ENCODE measurements at regions of chr1 and their contacts with region 1.

Region 1: GRCh38 chr1:15110875-15111230 is 42.7 kb upstream of the TMEM51 start:
- DNase-seq: no peak
- H3K4me3 ChIP-seq: no peak overlapping the region
- H3K27ac ChIP-seq: no peak overlapping the region
- H3K4me1 ChIP-seq: peaks cover 14 to 32% (median 16%) of the 10 kb centered on the region in 4 experiments
- H3K27me3 ChIP-seq: no peaks in the 10 kb centered on the region; a peak in 1 of 7 replicates
- CTCF ChIP-seq: peak; percentile 56 to 63 (median 60)
- EP300 ChIP-seq: no peak
- POLR2A ChIP-seq: no peak
- RAD21 ChIP-seq: peak; percentile 48 to 69

Region 2: GRCh38 chr1:15261155-15262002 is 150.5 kb after region 1 on chr1:
- CTCF ChIA-PET with region 1: no interaction called
- POLR2A ChIA-PET with region 1: no interaction called
- DNase-seq: peak in 1 of 2 experiments; percentile 46
- H3K4me3 ChIP-seq: no peak overlapping the region
- H3K27ac ChIP-seq: no peak overlapping the region
- H3K4me1 ChIP-seq: peaks cover 0 to 4% (median 2%) of the 10 kb centered on the region in 4 experiments; a peak in 3 of 7 replicates
- H3K27me3 ChIP-seq: no peaks in the 10 kb centered on the region
- CTCF ChIP-seq: no peak
- EP300 ChIP-seq: no peak
- POLR2A ChIP-seq: no peak
- RAD21 ChIP-seq: no peak

Region 3: GRCh38 chr1:15304701-15305467 is 194.0 kb after region 1 on chr1:
- CTCF ChIA-PET with region 1: interaction called, 10 read pairs
- POLR2A ChIA-PET with region 1: no interaction called
- DNase-seq: peak; percentile 17 to 89
- H3K4me3 ChIP-seq: no peak overlapping the region
- H3K27ac ChIP-seq: no peak overlapping the region
- H3K4me1 ChIP-seq: no peaks in the 10 kb centered on the region
- H3K27me3 ChIP-seq: no peaks in the 10 kb centered on the region; a peak in 1 of 7 replicates
- CTCF ChIP-seq: peak; percentile 72 to 86 (median 81)
- EP300 ChIP-seq: no peak
- POLR2A ChIP-seq: no peak
- RAD21 ChIP-seq: peak; percentile 86 to 87

Region 4: GRCh38 chr1:15501208-15502032 is 390.6 kb after region 1 on chr1:
- CTCF ChIA-PET with region 1: no interaction called
- POLR2A ChIA-PET with region 1: no interaction called
- DNase-seq: peak; percentile 27 to 90
- H3K4me3 ChIP-seq: no peak overlapping the region
- H3K27ac ChIP-seq: no peak overlapping the region
- H3K4me1 ChIP-seq: peaks cover 0 to 1% (median under 1%) of the 10 kb centered on the region in 4 experiments; a peak in 4 of 7 replicates
- H3K27me3 ChIP-seq: no peaks in the 10 kb centered on the region
- CTCF ChIP-seq: peak; percentile 76 to 97 (median 90)
- EP300 ChIP-seq: no peak
- POLR2A ChIP-seq: no peak
- RAD21 ChIP-seq: peak; percentile 64 to 79